Dendritic cell treated with granulocyte-macrophage colony-stimulating factor and Interleukin-4, amounts not matched to agents 40 ng/mL and 50 ng/mL, for 4 days (primary cell): ENCODE measurements at regions of chr15 and their contacts with region 1.

Region 1: GRCh38 chr15:78437762-78438302 is at the start of gene IREB2:
- H3K4me3 Mint-ChIP-seq: peak within 1 kb of the TSS; percentile 86
- H3K27ac Mint-ChIP-seq: peak within 1 kb of the TSS; percentile 89
- H3K4me1 Mint-ChIP-seq: peaks cover 35% of the 10 kb centered on the region
- H3K27me3 Mint-ChIP-seq: no peaks in the 10 kb centered on the region

Region 2: GRCh38 chr15:78455749-78456148 is 17.9 kb after region 1 on chr15:
- intact Hi-C with region 1: loop called (anchors 2 kb)
- H3K4me3 Mint-ChIP-seq: no peak overlapping the region
- H3K27ac Mint-ChIP-seq: no peak overlapping the region
- H3K4me1 Mint-ChIP-seq: peaks cover 76% of the 10 kb centered on the region
- H3K27me3 Mint-ChIP-seq: no peaks in the 10 kb centered on the region

Region 3: GRCh38 chr15:78536134-78536533 is 98.3 kb after region 1 on chr15:
- intact Hi-C with region 1: loop called (anchors 5 kb)
- H3K4me3 Mint-ChIP-seq: no peak overlapping the region
- H3K27ac Mint-ChIP-seq: peak overlapping the region; percentile 25
- H3K4me1 Mint-ChIP-seq: peaks cover 22% of the 10 kb centered on the region
- H3K27me3 Mint-ChIP-seq: no peaks in the 10 kb centered on the region